ENCODE measurements at regions of chr1 and their contacts with region 1.

Region 1: DNA sequence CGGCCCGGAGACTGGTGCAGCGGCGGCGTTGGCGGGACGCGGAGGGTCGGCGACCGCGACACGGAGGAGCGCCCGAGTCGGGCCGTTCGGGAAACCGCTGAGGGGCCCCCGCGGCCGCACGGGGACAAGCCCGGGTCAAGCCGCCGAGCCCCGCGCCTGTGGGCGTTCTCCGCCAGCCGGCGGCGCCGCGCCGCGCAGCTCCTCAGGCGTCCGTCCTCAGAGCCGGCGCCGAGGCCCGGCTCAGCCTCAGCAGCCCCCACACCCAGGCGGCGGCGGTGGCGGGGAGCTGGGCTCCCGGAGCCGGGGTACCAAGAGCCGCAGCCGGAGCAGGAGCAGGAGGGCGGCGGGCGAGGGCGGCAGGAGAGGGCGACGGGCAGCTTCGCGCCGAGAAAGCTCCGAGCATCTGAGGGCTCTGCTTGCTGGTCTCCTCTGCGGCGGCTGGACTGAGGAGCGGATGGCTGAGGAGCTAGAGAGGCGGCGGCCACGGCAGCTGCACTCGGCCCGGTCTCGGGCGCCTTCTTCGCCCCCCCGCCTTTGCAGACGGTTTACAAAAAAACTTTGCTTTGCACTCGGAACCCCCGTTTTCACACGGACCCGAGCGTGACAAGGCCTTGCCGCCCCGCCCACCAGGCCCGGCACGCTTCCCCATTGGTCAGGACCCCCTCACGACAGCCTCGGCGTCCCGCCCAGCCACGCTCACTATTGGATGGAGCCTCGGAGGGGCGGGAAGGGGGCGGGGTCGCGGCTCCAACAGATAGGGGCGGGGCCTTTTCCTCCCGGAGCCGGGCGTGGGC is at the start of gene SLC30A1:
- DNase-seq: peak; percentile 99
- H3K4me3 Mint-ChIP-seq: peak within 1 kb of the TSS; percentile 90
- H3K27ac Mint-ChIP-seq: peak within 1 kb of the TSS; percentile 75
- H3K4me1 Mint-ChIP-seq: peaks cover 31% of the 10 kb centered on the region
- H3K27me3 Mint-ChIP-seq: no peaks in the 10 kb centered on the region
- total RNA-seq, gene SLC30A1: 4.4 to 4.7 TPM

Region 2: GRCh38 chr1:209769171-209769904 is 1809.5 kb before region 1 on chr1:
- CTCF ChIA-PET with region 1: no interaction called
- intact Hi-C with region 1: loop called (anchors 10 kb)
- DNase-seq: peak; percentile 92
- H3K4me3 Mint-ChIP-seq: no peak overlapping the region
- H3K27ac Mint-ChIP-seq: no peak overlapping the region
- H3K4me1 Mint-ChIP-seq: peaks cover 10% of the 10 kb centered on the region
- H3K27me3 Mint-ChIP-seq: no peaks in the 10 kb centered on the region

Region 3: DNA sequence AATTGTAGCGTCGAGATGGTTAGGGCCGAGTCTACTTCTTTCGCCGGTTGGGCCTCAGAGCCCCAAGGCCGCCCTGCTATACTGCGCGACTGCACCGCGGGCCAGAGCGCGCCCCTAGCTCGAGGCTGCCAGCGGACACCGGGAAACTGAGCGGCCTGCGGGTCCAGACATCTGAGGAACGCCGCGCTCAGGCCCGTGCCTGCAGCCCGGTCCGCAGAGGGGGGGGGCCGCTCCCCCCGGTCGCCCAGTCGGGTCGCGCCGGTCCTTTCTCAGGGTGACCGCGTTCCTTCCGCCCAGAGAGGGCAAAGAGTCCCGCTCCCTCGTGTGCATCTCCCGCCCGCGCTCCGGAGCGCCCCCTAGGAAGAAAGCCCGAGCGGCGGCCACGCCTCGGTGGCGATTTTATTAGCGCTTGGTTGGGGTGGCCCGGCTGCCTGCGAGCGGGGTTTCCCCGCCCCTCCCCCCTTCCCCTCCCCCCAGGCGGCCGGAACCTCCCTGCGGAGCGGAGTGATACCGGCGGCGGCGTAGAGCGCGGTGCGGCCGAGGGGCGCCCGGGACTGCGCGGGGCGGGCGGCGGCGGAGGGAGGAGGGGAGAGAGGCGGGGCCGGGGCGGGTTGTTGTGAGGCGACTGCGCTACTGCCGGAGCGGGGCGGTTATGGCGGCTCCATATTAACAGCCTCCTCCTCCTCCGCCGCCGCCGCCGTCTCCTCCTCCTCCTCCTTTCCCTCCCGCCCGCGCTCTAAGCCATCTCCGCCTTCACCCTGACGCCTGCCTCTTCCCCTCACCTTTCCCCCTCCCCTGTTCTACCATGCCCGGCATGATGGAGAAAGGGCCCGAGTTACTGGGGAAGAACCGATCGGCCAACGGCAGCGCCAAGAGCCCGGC is 319.8 kb before region 1 on chr1 and contains the start of gene RCOR3:
- CTCF ChIA-PET with region 1: no interaction called
- intact Hi-C with region 1: loop called (anchors 1 kb)
- DNase-seq: peak; percentile 93
- H3K4me3 Mint-ChIP-seq: peak within 1 kb of the TSS; percentile 90
- H3K27ac Mint-ChIP-seq: peak within 1 kb of the TSS; percentile 96
- H3K4me1 Mint-ChIP-seq: peaks cover 16% of the 10 kb centered on the region
- H3K27me3 Mint-ChIP-seq: no peaks in the 10 kb centered on the region
- total RNA-seq, gene RCOR3: 28.9 to 30.8 TPM

Region 4: GRCh38 chr1:211606914-211607755 is 28.3 kb after region 1 on chr1:
- CTCF ChIA-PET with region 1: interaction called, 5 read pairs
- intact Hi-C with region 1: loop called (anchors 2 kb)
- DNase-seq: peak; percentile 43
- H3K4me3 Mint-ChIP-seq: peak overlapping the region; percentile 63
- H3K27ac Mint-ChIP-seq: peak overlapping the region; percentile 54
- H3K4me1 Mint-ChIP-seq: peaks cover 10% of the 10 kb centered on the region
- H3K27me3 Mint-ChIP-seq: no peaks in the 10 kb centered on the region

Region 5: GRCh38 chr1:211654838-211655787 is 76.3 kb after region 1 on chr1:
- CTCF ChIA-PET with region 1: interaction called, 9 read pairs
- intact Hi-C with region 1: loop called (anchors 1 kb)
- DNase-seq: peak; percentile 89
- H3K4me3 Mint-ChIP-seq: no peak overlapping the region
- H3K27ac Mint-ChIP-seq: no peak overlapping the region
- H3K4me1 Mint-ChIP-seq: no peaks in the 10 kb centered on the region
- H3K27me3 Mint-ChIP-seq: no peaks in the 10 kb centered on the region

Region 6: GRCh38 chr1:211939876-211940468 is 361.1 kb after region 1 on chr1:
- CTCF ChIA-PET with region 1: no interaction called
- intact Hi-C with region 1: loop called (anchors 2 kb)
- DNase-seq: peak; percentile 86
- H3K4me3 Mint-ChIP-seq: no peak overlapping the region
- H3K27ac Mint-ChIP-seq: no peak overlapping the region
- H3K4me1 Mint-ChIP-seq: peaks cover 44% of the 10 kb centered on the region
- H3K27me3 Mint-ChIP-seq: no peaks in the 10 kb centered on the region

Region 7: GRCh38 chr1:213015099-213016050 is 1436.5 kb after region 1 on chr1 and contains the start of gene ANGEL2:
- CTCF ChIA-PET with region 1: no interaction called
- intact Hi-C with region 1: loop called (anchors 1 kb)
- DNase-seq: peak; percentile 97
- H3K4me3 Mint-ChIP-seq: peak within 1 kb of the TSS; percentile 100
- H3K27ac Mint-ChIP-seq: peak within 1 kb of the TSS; percentile 99
- H3K4me1 Mint-ChIP-seq: peaks cover 27% of the 10 kb centered on the region
- H3K27me3 Mint-ChIP-seq: no peaks in the 10 kb centered on the region
- total RNA-seq, gene ANGEL2: 39.5 to 42.9 TPM

Measured in activated naive CD4-positive, alpha-beta T cell treated with anti-CD3 and anti-CD28 coated beads for 36 hours (primary cell).